HCT116 (cell line): ENCODE measurements at regions of chr7 and their contacts with region 1.

Region 1: DNA sequence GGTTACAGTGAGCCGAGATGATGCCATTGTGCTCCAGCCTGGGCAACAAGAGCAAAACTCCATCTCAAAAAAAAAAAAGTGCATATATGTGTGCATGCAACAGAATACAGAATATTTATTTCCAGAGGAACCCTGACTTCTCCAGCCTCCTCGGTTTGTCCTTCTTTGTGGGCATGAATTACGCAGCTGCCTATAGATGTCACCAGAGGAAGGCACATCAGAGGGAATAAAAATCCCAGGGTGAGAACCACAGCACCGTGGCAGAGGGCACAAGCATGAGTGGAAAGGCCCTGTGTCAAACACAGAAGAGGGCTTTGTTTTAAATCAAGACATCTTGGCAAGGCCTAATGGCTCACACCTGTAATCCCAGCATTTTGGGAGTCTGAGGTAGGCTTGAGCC is 24.4 kb upstream of the OCM2 start:
- DNase-seq: no peak
- ATAC-seq: no peak
- H3K4me3 ChIP-seq: no peak overlapping the region
- H3K27ac ChIP-seq: no peak overlapping the region
- H3K4me1 ChIP-seq: 0 out of 4 replicates have a peak, but pooled peaks cover 0 to 3% of the 10 kb centered on the region in 2 experiments
- H3K27me3 ChIP-seq: no peaks in the 10 kb centered on the region
- CTCF ChIP-seq: no peak
- POLR2A ChIP-seq: no peak
- RAD21 ChIP-seq: peak; percentile 16; the same call in 1 of the 2 replicates

Region 2: DNA sequence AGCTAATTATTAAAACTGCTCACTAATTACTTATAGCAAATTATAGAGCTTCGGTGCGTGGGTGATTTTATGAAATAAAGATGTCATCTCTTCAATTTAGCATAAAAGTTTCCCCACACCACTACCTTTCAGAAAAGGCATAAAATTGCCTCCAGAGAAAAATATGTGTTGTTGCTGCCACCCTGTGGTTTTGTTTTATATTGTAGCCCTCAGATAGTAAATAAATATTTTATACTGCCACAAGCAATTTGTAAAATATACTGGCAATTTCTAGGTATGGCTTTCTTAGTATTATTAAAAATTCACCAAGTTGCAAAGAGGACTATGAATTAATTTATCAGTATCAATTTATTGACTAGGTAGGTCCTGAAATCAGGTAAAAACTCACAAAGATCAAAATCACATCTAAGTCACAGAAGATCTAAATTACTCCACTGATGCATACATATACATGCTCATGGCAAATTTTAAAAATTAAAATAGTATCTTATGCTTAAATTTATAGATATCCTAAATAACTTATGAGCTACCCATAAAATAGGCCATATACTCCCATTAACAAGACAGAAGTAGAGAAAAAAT is 168.6 kb before region 1 on chr7:
- CTCF ChIA-PET with region 1: interaction called, 9 read pairs
- POLR2A ChIA-PET with region 1: no interaction called
- RAD21 ChIA-PET with region 1: no interaction called
- intact Hi-C with region 1: loop called (anchors 10 kb)
- DNase-seq: peak; percentile 13
- ATAC-seq: peak; percentile 67
- H3K4me3 ChIP-seq: no peak overlapping the region
- H3K27ac ChIP-seq: no peak overlapping the region
- H3K4me1 ChIP-seq: no peaks in the 10 kb centered on the region
- H3K27me3 ChIP-seq: no peaks in the 10 kb centered on the region
- CTCF ChIP-seq: peak; percentile 27 to 62 (median 54); a peak in 4 of 6 replicates
- POLR2A ChIP-seq: no peak
- RAD21 ChIP-seq: peak; percentile 64

Region 3: GRCh38 chr7:97971990-97972943 is 42.1 kb before region 1 on chr7:
- CTCF ChIA-PET with region 1: interaction called, 3 read pairs
- POLR2A ChIA-PET with region 1: interaction called, 12 read pairs
- RAD21 ChIA-PET with region 1: interaction called in 1 of 2 experiments, 3 read pairs
- intact Hi-C with region 1: no loop called
- DNase-seq: peak; percentile 63
- ATAC-seq: peak; percentile 85
- H3K4me3 ChIP-seq: peak overlapping the region; percentile 93 to 95
- H3K27ac ChIP-seq: peak overlapping the region; percentile 65
- H3K4me1 ChIP-seq: peaks cover 2 to 10% of the 10 kb centered on the region in 2 experiments; a peak in 2 of 4 replicates
- H3K27me3 ChIP-seq: no peaks in the 10 kb centered on the region
- CTCF ChIP-seq: peak in 2 of 3 experiments; percentile 31 to 47; a peak in 3 of 6 replicates
- POLR2A ChIP-seq: peak; percentile 75
- RAD21 ChIP-seq: no peak

Region 4: GRCh38 chr7:98168181-98168905 is 154.0 kb after region 1 on chr7:
- CTCF ChIA-PET with region 1: interaction called, 13 read pairs
- POLR2A ChIA-PET with region 1: interaction called, 3 read pairs
- RAD21 ChIA-PET with region 1: no interaction called
- intact Hi-C with region 1: no loop called
- DNase-seq: peak; percentile 67
- ATAC-seq: peak; percentile 72
- H3K4me3 ChIP-seq: no peak overlapping the region
- H3K27ac ChIP-seq: no peak overlapping the region
- H3K4me1 ChIP-seq: peaks cover 0 to 2% of the 10 kb centered on the region in 2 experiments; a peak in 1 of 4 replicates
- H3K27me3 ChIP-seq: no peaks in the 10 kb centered on the region
- CTCF ChIP-seq: peak; percentile 80 to 85 (median 84)
- POLR2A ChIP-seq: no peak
- RAD21 ChIP-seq: peak; percentile 89